ENCODE measurements at regions of chr1 and their contacts with region 1.

Region 1: DNA sequence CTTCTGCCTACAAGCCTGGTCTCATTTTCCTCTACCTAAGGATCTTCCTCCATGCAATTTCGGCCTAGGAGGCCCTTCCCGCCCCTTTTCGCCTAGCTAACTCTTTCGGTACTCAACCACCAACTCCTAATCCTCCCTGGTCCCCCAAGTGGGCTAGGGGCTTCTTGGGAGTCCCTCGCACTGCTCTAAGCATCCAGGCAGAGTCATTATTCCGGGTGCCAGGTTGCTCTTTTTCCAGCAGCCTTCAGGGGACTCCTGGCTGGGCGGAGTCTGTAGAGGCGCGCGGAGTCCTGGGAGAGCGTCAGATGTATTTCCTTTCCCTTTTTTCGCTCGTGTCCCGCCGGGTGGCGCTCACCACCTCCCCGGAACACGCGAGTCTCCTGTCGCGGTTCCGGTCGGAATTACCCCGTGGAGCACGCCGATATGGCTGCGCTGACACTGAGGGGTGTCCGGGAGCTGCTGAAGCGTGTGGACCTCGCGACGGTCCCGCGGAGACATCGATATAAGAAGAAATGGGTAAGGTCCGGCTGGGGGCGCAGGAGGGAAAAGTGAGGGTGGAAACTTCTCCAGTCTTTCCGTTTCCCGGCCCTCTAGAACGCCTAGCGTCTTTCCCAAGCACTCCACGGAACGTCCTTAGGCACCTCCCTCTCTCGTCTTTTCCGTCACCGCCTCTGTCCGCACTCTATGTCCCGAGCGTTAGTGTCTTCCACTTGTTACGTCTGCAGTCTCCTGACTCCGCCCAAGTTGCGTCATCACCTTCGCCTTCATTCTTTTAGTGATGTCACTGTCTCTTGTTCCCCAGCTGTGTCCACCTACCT is at the start of gene NSUN4:
- DNase-seq: peak; percentile 88
- H3K4me3 ChIP-seq: peak within 1 kb of the TSS; percentile 70 to 87
- H3K27ac ChIP-seq: peak within 1 kb of the TSS; percentile 95 to 96
- H3K4me1 ChIP-seq: peaks cover 6 to 15% of the 10 kb centered on the region in 2 experiments; a peak in 1 of 4 replicates
- H3K27me3 ChIP-seq: no peaks in the 10 kb centered on the region
- CTCF ChIP-seq: peak; percentile 78
- EP300 ChIP-seq: no peak
- RAD21 ChIP-seq: no peak
- polyA plus RNA-seq, gene NSUN4: 14.7 and 18.8 TPM in 2 replicates

Region 2: DNA sequence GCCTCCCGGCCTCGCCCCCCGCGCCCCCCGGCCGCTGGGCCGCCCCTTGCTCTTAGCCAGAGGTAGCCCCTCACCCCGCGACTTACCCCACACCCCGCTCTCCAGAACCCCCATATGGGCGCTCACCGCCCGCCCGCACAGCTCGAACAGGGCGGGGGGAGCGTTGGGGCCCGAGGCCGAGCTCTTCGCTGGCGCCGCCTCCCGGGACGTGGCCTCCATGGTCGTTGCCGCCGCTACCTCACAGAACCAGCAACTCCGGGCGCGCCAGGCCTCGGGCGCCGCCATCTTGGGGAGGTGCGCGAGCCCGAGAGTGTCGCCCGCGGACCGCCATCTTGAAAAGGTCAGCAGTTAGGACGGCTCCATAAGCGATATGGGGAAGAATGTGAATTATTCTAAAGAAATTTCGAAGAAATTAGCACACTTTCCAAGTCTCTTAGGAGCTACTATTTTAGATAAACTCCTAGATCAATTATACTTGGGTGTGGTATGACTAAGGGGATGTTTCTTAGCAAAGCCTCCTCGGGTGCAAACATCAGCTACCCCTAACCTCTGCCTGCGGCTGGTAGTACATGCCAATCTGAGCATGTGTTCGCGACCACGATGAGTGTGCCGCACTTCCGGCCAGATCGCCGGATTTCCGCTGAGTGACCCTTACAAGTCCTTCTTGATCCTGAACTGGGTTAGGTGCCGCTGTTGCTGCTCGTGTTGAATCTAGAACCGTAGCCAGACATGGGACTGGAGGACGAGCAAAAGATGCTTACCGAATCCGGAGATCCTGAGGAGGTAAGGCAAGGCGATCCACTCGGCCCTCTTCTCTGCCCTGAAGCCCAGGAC is 37.4 kb before region 1 on chr1 and contains the starts of genes LRRC41 and UQCRH:
- CTCF ChIA-PET with region 1: interaction called, 22 read pairs
- POLR2A ChIA-PET with region 1: interaction called, 17 read pairs
- DNase-seq: peak; percentile 91
- H3K4me3 ChIP-seq: peak within 1 kb of the TSS; percentile 66 to 89
- H3K27ac ChIP-seq: peak within 1 kb of the TSS; percentile 93
- H3K4me1 ChIP-seq: peaks cover 13 to 18% of the 10 kb centered on the region in 2 experiments
- H3K27me3 ChIP-seq: no peaks in the 10 kb centered on the region
- CTCF ChIP-seq: no peak
- EP300 ChIP-seq: no peak
- RAD21 ChIP-seq: no peak
- polyA plus RNA-seq, gene LRRC41: 59.3 and 66.0 TPM in 2 replicates
- polyA plus RNA-seq, gene UQCRH: 971 and 1,411 TPM in 2 replicates

Region 3: DNA sequence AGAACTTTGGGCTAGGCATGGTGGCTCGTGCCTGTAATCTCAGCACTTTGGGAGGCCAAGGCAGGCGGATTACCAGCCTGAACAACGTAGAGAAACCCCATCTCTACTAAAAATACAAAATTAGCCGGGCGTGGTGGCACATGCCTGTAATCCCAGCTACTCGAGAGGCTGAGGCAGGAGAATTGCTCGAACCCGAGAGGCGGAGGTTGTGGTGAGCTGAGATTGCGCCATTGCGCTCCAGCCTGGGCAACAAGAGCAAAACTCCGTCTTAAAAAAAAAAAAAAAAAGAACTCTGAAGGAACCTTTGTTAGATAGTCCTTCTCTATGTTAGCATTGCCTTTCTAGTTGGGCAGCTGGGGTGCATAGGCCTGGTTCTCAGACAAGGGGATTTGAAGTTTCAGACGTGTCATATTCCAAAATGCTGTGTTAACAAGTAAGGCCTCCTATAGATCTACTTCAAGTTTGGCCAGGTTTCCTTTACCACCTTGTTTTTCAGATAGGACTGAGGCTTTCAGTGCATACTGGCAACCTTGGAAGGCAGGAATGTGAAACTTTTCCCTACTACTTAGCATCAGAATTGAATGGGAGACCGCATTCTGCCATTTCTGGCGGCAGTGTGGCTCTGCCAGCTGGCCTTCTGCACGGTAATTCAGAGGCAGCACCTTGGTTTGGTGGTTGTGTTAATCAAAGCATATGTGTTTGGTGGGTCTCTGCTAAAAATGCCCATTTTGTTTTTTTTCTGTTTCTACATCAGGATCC is 31.0 kb before region 1 on chr1:
- CTCF ChIA-PET with region 1: interaction called, 22 read pairs
- POLR2A ChIA-PET with region 1: interaction called, 17 read pairs
- DNase-seq: no peak
- H3K4me3 ChIP-seq: no peak overlapping the region
- H3K27ac ChIP-seq: no peak overlapping the region
- H3K4me1 ChIP-seq: peaks cover 2 to 9% of the 10 kb centered on the region in 2 experiments; a peak in 2 of 4 replicates
- H3K27me3 ChIP-seq: no peaks in the 10 kb centered on the region
- CTCF ChIP-seq: no peak
- EP300 ChIP-seq: no peak
- RAD21 ChIP-seq: no peak

Measured in SK-N-SH (cell line).